ENCODE measurements at regions of chr5 and their contacts with region 1.

Region 1: GRCh38 chr5:141849375-141850243 is 28.6 kb downstream of the PCDH1 start:
- DNase-seq: peak; percentile 91
- ATAC-seq: peak; percentile 93

Region 2: DNA sequence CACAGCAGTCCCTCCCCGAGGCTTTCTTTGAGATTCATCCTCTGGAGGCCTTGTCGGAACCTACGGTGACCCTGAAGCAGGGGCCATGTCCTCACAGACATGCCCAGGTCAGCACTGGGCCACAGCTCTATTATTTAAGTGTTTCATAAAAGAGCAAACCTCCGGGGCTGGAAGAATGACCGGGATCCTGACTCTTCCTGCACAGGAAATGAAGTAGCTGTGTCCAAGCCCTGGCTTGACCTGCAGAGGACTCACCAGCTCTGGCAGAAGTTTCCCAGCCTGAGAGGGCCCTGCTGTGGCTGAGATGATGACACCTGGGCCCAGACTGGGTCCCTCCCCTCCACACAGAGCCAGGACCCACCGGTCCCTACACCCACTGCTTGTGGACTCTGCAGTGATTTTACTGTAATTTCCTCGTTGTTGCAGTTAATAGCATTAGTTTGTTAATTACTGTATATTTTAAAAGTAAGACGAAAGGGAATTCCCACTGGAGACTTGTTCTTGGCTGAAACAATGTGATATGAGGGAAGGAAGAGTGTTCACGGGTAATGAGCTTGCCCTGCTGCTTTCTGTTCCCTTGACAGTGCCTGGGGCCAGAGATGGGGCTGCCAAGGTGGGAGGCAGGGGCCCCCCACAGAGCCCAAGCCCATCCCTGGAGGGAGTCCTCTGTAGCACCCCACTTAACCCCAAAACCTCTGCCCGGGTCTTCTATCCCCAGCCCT is 43.6 kb before region 1 on chr5:
- intact Hi-C with region 1: loop called in 1 of 2 experiments (anchors 5 kb)
- DNase-seq: peak; percentile 63
- ATAC-seq: peak; percentile 70 to 84

Region 3: GRCh38 chr5:142095651-142096330 is 246.2 kb after region 1 on chr5:
- intact Hi-C with region 1: no loop called
- DNase-seq: no peak
- ATAC-seq: peak; percentile 74 to 76

Measured in left cardiac atrium (tissue), 4 donors.